H1 (cell line): ENCODE measurements at regions of chr12 and their contacts with region 1.

Region 1: GRCh38 chr12:112198120-112198733 is 72.9 kb downstream of the TRAFD1 start:
- DNase-seq: peak; percentile 53 to 82
- H3K4me3 ChIP-seq: no peak overlapping the region
- H3K27ac ChIP-seq: no peak overlapping the region
- H3K4me1 ChIP-seq: no peaks in the 10 kb centered on the region
- H3K27me3 ChIP-seq: peaks cover 0 to 1% (median 0%) of the 10 kb centered on the region in 4 experiments; a peak in 1 of 7 replicates
- CTCF ChIP-seq: peak; percentile 62 to 91 (median 73)
- EP300 ChIP-seq: no peak
- POLR2A ChIP-seq: no peak
- RAD21 ChIP-seq: peak; percentile 84 to 88

Region 2: GRCh38 chr12:112183141-112184021 is 14.8 kb before region 1 on chr12:
- CTCF ChIA-PET with region 1: interaction called, 43 read pairs
- POLR2A ChIA-PET with region 1: interaction called, 3 read pairs
- DNase-seq: peak in 1 of 2 experiments; percentile 15
- H3K4me3 ChIP-seq: no peak overlapping the region
- H3K27ac ChIP-seq: peak overlapping the region; percentile 47; the same call in 1 of the 2 replicates
- H3K4me1 ChIP-seq: peaks cover 9 to 22% (median 12%) of the 10 kb centered on the region in 4 experiments; a peak in 6 of 7 replicates
- H3K27me3 ChIP-seq: no peaks in the 10 kb centered on the region
- CTCF ChIP-seq: no peak
- EP300 ChIP-seq: no peak
- POLR2A ChIP-seq: no peak
- RAD21 ChIP-seq: no peak

Region 3: GRCh38 chr12:112214064-112214463 is 15.8 kb after region 1 on chr12:
- CTCF ChIA-PET with region 1: interaction called, 27 read pairs
- POLR2A ChIA-PET with region 1: no interaction called
- DNase-seq: no peak
- H3K4me3 ChIP-seq: no peak overlapping the region
- H3K27ac ChIP-seq: no peak overlapping the region
- H3K4me1 ChIP-seq: no peaks in the 10 kb centered on the region
- H3K27me3 ChIP-seq: no peaks in the 10 kb centered on the region
- CTCF ChIP-seq: no peak
- EP300 ChIP-seq: no peak
- POLR2A ChIP-seq: no peak
- RAD21 ChIP-seq: no peak

Region 4: DNA sequence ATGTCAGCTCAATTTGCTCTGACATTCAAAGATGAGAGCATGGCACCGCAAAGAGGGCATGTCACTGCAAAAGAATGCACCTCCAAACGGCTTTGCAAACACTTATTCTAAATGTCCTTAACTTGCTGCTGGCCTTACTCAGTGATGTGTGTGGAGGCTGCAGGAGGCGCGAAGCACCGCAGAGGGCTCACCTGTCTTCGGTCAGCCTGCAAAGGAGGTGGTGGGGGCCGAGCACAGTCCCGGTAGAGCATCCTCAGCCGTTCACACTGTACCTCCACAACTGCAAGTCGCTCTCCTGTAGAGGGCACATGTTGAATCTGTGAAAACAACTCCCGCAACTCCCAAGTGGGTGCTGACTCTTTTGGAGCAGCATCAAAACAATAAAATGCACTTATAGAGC is 21.0 kb after region 1 on chr12:
- CTCF ChIA-PET with region 1: interaction called, 15 read pairs
- POLR2A ChIA-PET with region 1: no interaction called
- DNase-seq: no peak
- H3K4me3 ChIP-seq: no peak overlapping the region
- H3K27ac ChIP-seq: no peak overlapping the region
- H3K4me1 ChIP-seq: no peaks in the 10 kb centered on the region
- H3K27me3 ChIP-seq: no peaks in the 10 kb centered on the region
- CTCF ChIP-seq: peak in 1 of 3 experiments; percentile 32; a peak in 2 of 4 replicates
- EP300 ChIP-seq: no peak
- POLR2A ChIP-seq: no peak
- RAD21 ChIP-seq: no peak

Region 5: GRCh38 chr12:112261559-112261958 is 63.3 kb after region 1 on chr12:
- CTCF ChIA-PET with region 1: interaction called, 12 read pairs
- POLR2A ChIA-PET with region 1: no interaction called
- DNase-seq: no peak
- H3K4me3 ChIP-seq: no peak overlapping the region
- H3K27ac ChIP-seq: no peak overlapping the region
- H3K4me1 ChIP-seq: peaks cover 0 to under 1% (median 0%) of the 10 kb centered on the region in 4 experiments; a peak in 1 of 7 replicates
- H3K27me3 ChIP-seq: no peaks in the 10 kb centered on the region
- CTCF ChIP-seq: peak; percentile 49 to 67 (median 50)
- EP300 ChIP-seq: no peak
- POLR2A ChIP-seq: no peak
- RAD21 ChIP-seq: peak; percentile 38 to 54

Region 6: DNA sequence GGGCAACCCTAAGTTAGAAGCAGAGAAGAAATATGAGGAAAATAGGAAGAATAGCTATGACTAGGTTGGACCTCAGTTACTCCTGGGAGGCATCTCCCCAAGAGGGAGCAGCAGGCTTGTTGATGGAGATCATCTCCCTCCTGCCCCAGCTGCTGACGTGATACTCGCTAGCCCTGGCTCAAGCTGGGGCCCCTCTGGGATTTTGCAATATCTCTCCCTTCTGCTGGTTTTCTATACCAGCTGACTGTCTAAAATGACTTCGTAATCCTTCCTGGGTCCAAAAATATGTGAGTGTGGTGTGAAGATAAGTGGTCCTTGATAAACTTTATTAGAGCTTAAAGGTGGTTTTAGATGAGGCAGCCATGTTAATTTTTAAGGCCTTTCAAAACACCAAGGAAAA is 188.5 kb after region 1 on chr12:
- CTCF ChIA-PET with region 1: interaction called, 46 read pairs
- POLR2A ChIA-PET with region 1: interaction called, 7 read pairs
- DNase-seq: no peak
- H3K4me3 ChIP-seq: no peak overlapping the region
- H3K27ac ChIP-seq: no peak overlapping the region
- H3K4me1 ChIP-seq: no peaks in the 10 kb centered on the region; a peak in 1 of 7 replicates
- H3K27me3 ChIP-seq: no peaks in the 10 kb centered on the region
- CTCF ChIP-seq: no peak
- EP300 ChIP-seq: no peak
- POLR2A ChIP-seq: no peak
- RAD21 ChIP-seq: no peak

Region 7: DNA sequence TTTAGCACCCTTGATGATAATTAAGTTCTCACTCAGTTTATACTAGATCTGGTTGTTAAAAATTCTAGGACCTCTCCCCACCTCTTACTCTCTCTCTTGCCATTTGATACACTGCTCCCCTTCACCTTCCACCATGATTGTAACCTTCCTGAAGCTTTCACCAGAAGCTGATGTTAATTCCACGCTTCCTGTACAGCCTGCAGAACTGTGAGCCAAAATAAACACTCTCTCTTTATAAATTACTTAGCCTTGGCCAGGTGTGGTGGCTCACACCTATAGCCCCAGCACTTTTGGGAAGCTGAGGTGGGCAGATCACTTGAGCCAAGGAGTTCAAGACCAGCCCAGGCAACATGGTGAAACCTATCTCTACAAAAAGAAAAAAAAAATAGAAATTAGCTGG is 195.1 kb after region 1 on chr12:
- CTCF ChIA-PET with region 1: interaction called, 46 read pairs
- POLR2A ChIA-PET with region 1: interaction called, 7 read pairs
- DNase-seq: no peak
- H3K4me3 ChIP-seq: no peak overlapping the region
- H3K27ac ChIP-seq: no peak overlapping the region
- H3K4me1 ChIP-seq: no peaks in the 10 kb centered on the region
- H3K27me3 ChIP-seq: no peaks in the 10 kb centered on the region
- CTCF ChIP-seq: no peak
- EP300 ChIP-seq: no peak
- POLR2A ChIP-seq: no peak
- RAD21 ChIP-seq: no peak

Region 8: DNA sequence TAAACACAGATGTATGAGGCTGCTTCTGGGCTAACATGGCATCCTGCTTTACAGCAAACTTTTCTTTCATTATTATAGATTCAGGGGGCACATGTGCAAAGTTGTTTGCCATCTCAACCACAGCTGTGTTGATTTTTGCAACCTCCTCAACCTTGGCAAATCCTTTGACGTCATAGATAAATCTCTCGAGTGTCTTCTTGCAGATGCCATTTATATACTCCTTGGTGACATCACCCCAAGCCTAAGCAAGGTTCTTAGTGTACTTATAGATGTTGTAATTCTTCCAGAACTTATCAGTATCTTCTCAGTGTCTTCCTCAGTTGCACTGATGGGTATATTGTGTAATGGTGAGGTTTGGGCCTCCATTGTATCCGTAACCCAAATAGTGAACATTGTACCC is 457.9 kb after region 1 on chr12:
- CTCF ChIA-PET with region 1: no interaction called
- POLR2A ChIA-PET with region 1: no interaction called
- DNase-seq: no peak
- H3K4me3 ChIP-seq: no peak overlapping the region
- H3K27ac ChIP-seq: no peak overlapping the region
- H3K4me1 ChIP-seq: no peaks in the 10 kb centered on the region
- H3K27me3 ChIP-seq: peaks cover 0 to 3% (median 0%) of the 10 kb centered on the region in 4 experiments; a peak in 2 of 7 replicates
- CTCF ChIP-seq: no peak
- EP300 ChIP-seq: no peak
- POLR2A ChIP-seq: no peak
- RAD21 ChIP-seq: no peak